ENCODE measurements at regions of chr12 and their contacts with region 1.

Region 1: GRCh38 chr12:111451649-111452129 is 46.0 kb downstream of the SH2B3 start:
- DNase-seq: no peak
- ATAC-seq: peak; percentile 35

Region 2: DNA sequence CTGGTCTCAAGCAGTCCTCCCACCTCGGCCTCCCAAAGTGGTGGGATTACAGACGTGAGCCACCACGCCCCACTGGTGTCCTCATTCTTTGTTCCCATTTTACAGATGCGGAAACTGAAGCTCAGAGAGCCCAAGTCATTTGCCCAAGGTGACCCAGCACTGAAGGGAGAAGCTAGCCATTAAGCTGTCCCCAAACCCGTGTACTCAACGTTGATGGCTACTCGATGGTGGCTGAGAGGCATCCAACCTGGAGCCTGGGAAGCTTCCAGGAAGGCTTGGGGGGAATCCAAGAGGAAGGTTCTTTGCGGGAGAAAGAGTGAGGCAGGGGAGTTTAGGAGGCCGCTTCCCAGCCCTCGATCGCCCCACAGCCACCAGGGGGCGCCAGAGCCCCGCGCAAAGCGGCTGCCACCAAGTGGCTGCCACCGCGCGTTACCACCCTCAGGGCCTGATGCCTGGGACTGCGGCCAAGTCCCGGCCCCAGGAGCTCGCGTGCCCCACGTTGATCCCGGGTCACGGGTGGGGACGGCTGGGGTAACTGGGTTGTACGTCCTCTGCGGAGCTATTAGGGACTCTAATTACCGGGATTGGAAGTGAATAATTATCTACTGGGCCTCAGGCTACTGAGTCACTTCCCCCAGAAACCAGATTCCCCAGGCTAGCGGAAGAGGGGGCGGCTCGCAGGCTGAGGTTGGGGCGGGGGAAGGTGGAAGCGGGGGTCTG is 54.8 kb before region 1 on chr12:
- intact Hi-C with region 1: loop called (anchors 2 to 5 kb)
- DNase-seq: peak; percentile 74 to 90
- ATAC-seq: peak; percentile 93

Region 3: DNA sequence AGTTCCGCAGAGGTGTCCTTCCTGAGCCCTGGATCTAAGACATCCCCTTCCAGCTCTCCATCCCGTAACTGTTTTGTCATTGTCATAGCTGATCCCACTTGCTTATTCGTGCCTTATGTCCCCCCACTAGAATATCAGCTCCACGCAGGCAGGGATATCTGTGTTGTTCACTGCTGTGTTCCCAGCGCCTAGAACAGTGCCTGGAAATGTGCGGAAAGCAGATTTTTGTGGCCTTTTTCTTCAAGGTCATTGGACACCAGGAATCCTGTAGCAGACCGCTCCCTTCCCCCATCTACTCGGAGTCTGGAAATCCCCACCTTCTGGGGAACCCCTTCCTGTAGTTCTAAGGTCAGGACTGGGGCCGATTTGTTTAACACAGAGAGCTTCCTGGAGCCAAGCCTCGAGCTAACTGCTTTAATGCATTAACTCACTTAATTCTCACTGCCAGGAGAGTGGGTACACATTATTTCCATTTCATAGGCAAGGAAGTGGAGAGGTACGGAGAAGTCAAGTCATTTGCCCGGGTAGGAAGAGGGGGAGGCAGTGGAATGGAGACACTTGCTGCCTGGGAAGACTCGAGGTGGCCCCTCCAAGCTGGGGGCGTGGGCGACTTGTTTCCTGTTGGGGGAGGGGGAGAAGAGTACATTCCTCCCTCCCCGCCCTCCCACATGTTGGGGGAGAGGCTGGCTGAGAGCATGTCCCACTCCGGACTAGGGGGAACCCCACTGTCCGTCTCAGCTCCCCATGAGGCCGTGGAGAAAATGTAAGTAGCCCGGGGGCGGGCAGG is 47.1 kb before region 1 on chr12:
- intact Hi-C with region 1: loop called in 1 of 2 experiments (anchors 5 kb)
- DNase-seq: peak; percentile 48 to 57
- ATAC-seq: peak; percentile 8